ENCODE measurements at regions of chr4 and their contacts with region 1.

Region 1: GRCh38 chr4:183407128-183407585 is 37.3 kb upstream of the CDKN2AIP start:
- DNase-seq: peak; percentile 76 to 94 (median 86)
- H3K4me3 ChIP-seq: peak overlapping the region; percentile 32 to 73 (median 53)
- H3K27ac ChIP-seq: peak overlapping the region in 58 of 59 donors; percentile 23 to 94 (median 86)
- H3K27me3 ChIP-seq: no peaks in the 10 kb centered on the region
- CTCF ChIP-seq: peak; percentile 85 to 99 (median 97)

Region 2: DNA sequence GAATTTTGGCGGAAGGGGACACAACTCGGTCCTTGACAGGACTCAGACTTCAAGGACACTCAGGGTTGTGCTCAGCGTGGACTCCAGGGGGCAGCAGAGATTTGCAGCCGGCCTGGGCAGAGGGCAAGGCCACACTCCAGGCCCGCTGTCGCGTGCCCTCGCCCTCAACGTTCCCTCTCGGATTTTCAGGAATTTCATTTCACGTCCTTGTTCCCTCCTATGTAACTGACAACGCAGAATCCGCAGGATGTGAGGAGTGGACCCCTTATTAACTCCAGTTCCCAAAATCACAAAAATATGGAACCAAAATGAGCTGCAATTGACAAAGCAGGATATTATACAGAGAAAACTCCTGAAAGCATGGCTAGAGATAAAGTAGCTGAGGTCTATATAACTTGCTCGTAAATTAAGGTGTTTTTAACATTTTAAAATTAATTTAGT is 468.9 kb before region 1 on chr4:
- intact Hi-C with region 1: loop called in 1 of 2 experiments (anchors 10 kb)
- DNase-seq: peak; percentile 23 to 82 (median 65)
- H3K4me3 ChIP-seq: no peak overlapping the region
- H3K27ac ChIP-seq: no peak overlapping the region
- H3K27me3 ChIP-seq: peaks cover 0 to 13% (median 0%) of the 10 kb centered on the region in 45 donors
- CTCF ChIP-seq: peak; percentile 42 to 93 (median 84)

Region 3: DNA sequence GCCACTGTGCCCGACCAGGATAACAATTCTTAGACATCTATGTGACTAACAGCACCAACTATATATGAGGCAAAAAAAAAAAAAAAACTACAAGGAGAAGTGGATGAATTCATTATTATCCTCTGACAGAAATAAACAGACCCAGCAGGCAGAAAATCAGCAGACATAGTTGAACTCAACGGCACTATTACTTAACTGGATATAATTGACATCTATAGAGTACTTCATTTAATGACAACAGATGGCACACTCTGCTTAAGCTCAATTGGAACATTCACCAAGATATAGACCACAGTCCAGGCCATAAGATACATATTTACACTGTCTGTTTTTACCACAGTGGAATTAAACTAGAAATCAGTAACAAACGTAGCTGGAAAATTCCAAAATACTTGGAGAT is 100.3 kb before region 1 on chr4:
- intact Hi-C with region 1: no loop called
- DNase-seq: no peak
- H3K4me3 ChIP-seq: no peak overlapping the region
- H3K27ac ChIP-seq: no peak overlapping the region
- H3K27me3 ChIP-seq: no peaks in the 10 kb centered on the region
- CTCF ChIP-seq: no peak

Region 4: DNA sequence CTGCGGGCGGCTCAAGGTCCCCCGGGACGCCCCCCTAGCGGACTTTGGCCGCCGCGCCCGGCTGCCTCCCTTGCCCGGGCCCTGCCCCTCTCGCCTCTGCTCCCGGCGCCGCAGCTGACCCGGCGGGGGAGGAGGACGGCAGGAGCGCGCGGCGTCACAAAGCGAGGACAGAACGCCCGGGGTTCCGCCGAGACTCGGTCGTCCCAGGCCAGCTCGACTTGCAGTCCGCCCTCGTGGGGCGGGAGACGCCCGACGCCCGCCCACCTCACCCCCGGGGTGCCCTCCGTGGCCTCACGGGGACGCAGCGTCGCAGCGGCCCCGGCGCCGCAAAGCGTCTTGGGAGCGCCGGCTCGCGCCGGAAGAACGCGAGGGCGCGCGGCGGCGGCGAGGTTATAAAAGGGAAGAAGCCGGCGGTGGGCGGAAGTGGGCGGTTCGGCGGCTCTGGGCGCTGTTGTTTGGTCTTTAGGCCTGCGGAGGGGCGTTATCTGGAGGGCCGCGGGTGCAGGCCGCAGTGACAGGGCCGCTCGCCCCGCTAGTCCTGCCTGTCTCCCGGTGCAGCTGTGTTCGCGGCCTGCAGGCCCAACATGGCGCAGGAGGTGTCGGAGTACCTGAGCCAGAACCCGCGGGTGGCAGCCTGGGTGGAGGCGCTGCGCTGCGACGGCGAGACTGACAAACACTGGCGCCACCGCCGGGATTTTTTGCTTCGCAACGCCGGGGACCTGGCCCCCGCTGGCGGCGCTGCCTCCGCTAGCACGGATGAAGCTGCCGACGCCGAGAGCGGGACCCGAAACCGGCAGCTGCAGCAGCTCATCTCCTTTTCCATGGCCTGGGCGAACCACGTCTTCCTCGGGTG is 37.3 kb after region 1 on chr4 and contains the start of gene CDKN2AIP:
- intact Hi-C with region 1: loop called in 1 of 2 experiments (anchors 5 kb)
- DNase-seq: peak; percentile 80 to 93 (median 86)
- H3K4me3 ChIP-seq: peak within 1 kb of the TSS; percentile 66 to 100 (median 94)
- H3K27ac ChIP-seq: peak within 1 kb of the TSS; percentile 91 to 99 (median 98)
- H3K27me3 ChIP-seq: no peaks in the 10 kb centered on the region
- CTCF ChIP-seq: peak in 42 of 56 donors; percentile 4 to 68 (median 36)
- total RNA-seq, gene CDKN2AIP: 10.3 to 20.2 (median 14.8) TPM

Region 5: GRCh38 chr4:183478123-183478522 is 71.0 kb after region 1 on chr4:
- intact Hi-C with region 1: no loop called
- DNase-seq: no peak
- H3K4me3 ChIP-seq: no peak overlapping the region
- H3K27ac ChIP-seq: no peak overlapping the region
- H3K27me3 ChIP-seq: no peaks in the 10 kb centered on the region
- CTCF ChIP-seq: no peak

Region 6: GRCh38 chr4:183563874-183564273 is 156.7 kb after region 1 on chr4:
- intact Hi-C with region 1: no loop called
- DNase-seq: no peak
- H3K4me3 ChIP-seq: no peak overlapping the region
- H3K27ac ChIP-seq: no peak overlapping the region
- H3K27me3 ChIP-seq: no peaks in the 10 kb centered on the region
- CTCF ChIP-seq: no peak